ENCODE measurements at regions of chr7 and their contacts with region 1.

Region 1: GRCh38 chr7:26365077-26365900 is 73.6 kb downstream of the SNX10 start:
- DNase-seq: peak; percentile 88 to 94 (median 91)
- H3K4me3 ChIP-seq: no peak overlapping the region
- H3K27ac ChIP-seq: no peak overlapping the region
- H3K4me1 ChIP-seq: peaks cover 5 to 31% (median 24%) of the 10 kb centered on the region in 4 experiments
- H3K27me3 ChIP-seq: no peaks in the 10 kb centered on the region

Region 2: DNA sequence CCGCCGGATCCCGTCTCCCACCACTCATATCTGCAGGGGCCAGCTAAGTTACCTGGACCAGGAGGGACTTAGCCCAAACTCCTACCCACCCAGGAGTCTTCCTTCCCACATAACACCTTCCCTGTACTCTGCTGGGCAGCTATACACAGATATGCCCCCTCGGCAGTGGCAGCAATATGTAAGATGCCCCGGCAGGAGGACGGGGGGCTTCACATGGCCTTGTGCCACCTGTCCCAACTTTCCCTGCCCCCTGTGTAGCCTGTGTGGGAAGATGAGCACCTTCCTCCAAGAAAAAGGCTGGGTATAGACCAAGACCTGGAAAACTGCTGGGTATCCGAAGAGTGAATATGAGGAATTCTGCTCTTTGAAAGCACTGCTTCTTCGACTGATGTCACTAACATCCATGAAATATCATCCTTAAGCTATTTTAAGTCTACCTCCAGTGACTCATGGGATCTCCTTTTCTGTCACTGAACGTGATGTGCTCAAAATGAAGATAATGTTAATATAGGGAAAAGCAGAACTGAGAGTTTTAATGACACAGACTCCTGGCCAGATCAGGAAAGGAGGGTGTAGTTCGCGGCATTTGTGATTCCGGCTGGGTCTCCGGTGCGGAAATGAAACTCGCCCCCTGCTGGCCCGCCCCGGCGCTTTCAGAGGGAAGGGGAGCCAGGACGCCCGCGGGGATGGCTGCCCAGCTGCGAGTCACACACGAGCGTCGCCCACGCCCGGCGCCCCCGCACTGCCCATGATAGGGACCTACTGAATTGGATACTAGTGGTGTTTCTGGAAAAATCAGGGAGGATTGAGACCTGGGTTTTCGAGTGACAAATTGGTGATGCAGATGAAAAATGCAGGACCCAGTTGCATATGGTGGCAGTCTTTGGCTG is 470.1 kb before region 1 on chr7:
- CTCF ChIA-PET with region 1: interaction called, 112 read pairs
- POLR2A ChIA-PET with region 1: interaction called, 3 read pairs
- DNase-seq: peak; percentile 87 to 91 (median 89)
- H3K4me3 ChIP-seq: peak overlapping the region in 4 of 7 experiments; percentile 1 to 60 (median 36)
- H3K27ac ChIP-seq: no peak overlapping the region
- H3K4me1 ChIP-seq: peaks cover 8 to 41% (median 30%) of the 10 kb centered on the region in 4 experiments
- H3K27me3 ChIP-seq: peaks cover 0 to 36% (median 12%) of the 10 kb centered on the region in 5 experiments

Region 3: DNA sequence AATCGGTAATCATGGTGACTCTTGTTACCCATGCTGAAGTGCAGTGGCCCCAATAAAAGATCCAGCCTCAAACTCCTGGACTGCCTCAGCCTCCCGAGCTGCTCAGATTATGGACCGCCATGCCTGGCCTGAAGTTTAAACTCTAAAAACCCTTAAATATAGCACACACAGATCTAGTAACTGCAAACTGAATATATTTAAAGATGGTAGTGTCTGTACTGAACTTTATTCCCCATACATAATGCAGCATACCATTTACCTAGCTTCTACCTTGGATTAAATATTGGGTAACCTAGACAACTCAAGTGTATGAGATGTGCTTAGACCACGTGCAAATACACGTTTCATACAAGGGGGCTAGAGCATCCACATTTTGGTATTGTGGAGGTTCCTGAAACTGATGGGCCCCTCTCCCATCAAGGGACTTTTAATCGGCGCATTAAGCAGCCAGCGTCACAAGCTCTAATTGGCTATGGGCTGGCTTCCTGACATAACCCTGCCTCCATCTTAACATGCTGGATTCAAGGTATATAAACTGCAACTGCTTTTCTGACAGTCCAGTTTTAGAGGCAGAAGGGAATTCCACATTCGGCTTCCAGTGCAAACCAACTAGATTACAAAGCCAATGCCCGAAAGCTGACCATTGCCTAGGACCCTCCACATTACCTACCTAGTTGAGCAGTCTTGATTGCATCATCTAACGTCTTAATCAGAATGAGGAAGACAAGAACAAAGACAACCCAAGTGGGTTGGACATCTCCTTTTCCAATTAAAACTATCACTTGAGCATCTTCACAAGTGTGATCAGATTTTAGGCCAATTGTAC is 177.7 kb before region 1 on chr7:
- CTCF ChIA-PET with region 1: interaction called, 13 read pairs
- POLR2A ChIA-PET with region 1: no interaction called
- DNase-seq: peak in 2 of 3 donors; percentile 53 to 60
- H3K4me3 ChIP-seq: no peak overlapping the region
- H3K27ac ChIP-seq: peak overlapping the region in 1 of 2 experiments; percentile 14
- H3K4me1 ChIP-seq: peaks cover 2 to 8% (median 2%) of the 10 kb centered on the region in 4 experiments
- H3K27me3 ChIP-seq: no peaks in the 10 kb centered on the region

Region 4: DNA sequence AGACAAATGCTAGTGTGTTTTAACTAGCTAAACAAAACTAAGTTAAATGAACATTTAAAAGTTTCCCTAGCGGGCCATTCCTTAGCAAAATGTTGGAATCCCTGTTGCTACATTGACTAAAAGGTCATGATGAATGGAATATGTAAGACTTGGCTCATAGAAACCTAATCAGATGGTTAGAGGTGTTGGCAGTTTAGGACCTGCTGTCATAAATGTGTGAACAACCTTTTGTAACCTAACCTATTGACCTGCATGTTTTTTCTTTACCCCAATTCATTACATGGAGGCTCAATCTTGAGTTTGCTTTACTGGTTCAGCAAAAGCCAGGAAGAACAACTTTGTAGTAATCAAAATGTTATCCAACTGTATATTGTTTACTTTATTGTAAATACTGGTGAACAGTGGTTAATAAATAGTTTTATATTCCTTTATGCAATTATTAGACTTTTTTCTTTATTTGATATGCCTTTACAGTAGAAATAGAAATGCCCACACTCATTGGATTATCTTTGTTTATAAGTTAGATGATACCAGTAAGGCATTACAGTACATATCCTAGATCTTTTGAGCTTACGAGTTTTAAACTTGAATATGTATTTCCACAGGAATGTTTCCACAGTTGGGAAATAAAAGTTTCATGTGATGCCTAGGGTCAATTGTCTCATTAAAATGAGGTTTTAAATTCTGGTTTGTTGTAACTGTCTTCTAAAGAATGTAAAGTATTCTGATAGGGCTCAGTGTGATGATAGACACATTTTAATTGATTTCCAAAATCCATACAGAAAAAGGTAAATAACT is 152.2 kb before region 1 on chr7:
- CTCF ChIA-PET with region 1: no interaction called
- POLR2A ChIA-PET with region 1: no interaction called
- DNase-seq: no peak
- H3K4me3 ChIP-seq: no peak overlapping the region
- H3K27ac ChIP-seq: no peak overlapping the region
- H3K4me1 ChIP-seq: peaks cover 0 to 2% (median 0%) of the 10 kb centered on the region in 4 experiments
- H3K27me3 ChIP-seq: no peaks in the 10 kb centered on the region

Region 5: DNA sequence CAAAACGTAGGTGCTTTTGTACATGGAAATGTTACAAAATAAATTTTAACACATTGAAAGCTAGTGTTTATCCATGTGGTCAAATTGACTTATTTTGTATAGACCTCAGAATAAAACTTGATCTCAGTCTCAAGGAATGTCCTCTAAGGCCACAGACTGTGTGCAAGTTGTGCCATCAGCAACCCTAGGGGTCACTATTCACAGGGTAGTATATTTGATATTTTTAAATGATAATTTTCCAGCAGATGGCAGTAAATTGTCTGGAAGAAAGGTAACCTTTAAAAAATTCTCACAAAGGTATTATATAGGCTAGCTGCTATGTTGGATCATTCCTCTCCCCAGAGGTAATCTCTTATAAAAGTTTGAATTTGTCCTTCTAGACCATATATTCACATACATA is 86.5 kb before region 1 on chr7:
- CTCF ChIA-PET with region 1: interaction called, 57 read pairs
- POLR2A ChIA-PET with region 1: no interaction called
- DNase-seq: peak; percentile 60 to 66 (median 64)
- H3K4me3 ChIP-seq: peak overlapping the region in 3 of 7 experiments; percentile 11 to 70 (median 48)
- H3K27ac ChIP-seq: no peak overlapping the region
- H3K4me1 ChIP-seq: peaks cover 0 to 4% (median 2%) of the 10 kb centered on the region in 4 experiments
- H3K27me3 ChIP-seq: no peaks in the 10 kb centered on the region

Region 6: GRCh38 chr7:26376175-26376917 is 11.1 kb after region 1 on chr7:
- CTCF ChIA-PET with region 1: interaction called, 12 read pairs
- POLR2A ChIA-PET with region 1: no interaction called
- DNase-seq: peak; percentile 75 to 89 (median 87)
- H3K4me3 ChIP-seq: peak overlapping the region; percentile 83 to 90 (median 85)
- H3K27ac ChIP-seq: peak overlapping the region; percentile 77 to 87
- H3K4me1 ChIP-seq: peaks cover 20 to 55% (median 33%) of the 10 kb centered on the region in 4 experiments
- H3K27me3 ChIP-seq: no peaks in the 10 kb centered on the region

Region 7: GRCh38 chr7:26507108-26507987 is 142.1 kb after region 1 on chr7:
- CTCF ChIA-PET with region 1: no interaction called
- POLR2A ChIA-PET with region 1: no interaction called
- DNase-seq: no peak
- H3K4me3 ChIP-seq: no peak overlapping the region
- H3K27ac ChIP-seq: no peak overlapping the region
- H3K4me1 ChIP-seq: peaks cover 0 to 18% (median 6%) of the 10 kb centered on the region in 4 experiments
- H3K27me3 ChIP-seq: no peaks in the 10 kb centered on the region

Region 8: DNA sequence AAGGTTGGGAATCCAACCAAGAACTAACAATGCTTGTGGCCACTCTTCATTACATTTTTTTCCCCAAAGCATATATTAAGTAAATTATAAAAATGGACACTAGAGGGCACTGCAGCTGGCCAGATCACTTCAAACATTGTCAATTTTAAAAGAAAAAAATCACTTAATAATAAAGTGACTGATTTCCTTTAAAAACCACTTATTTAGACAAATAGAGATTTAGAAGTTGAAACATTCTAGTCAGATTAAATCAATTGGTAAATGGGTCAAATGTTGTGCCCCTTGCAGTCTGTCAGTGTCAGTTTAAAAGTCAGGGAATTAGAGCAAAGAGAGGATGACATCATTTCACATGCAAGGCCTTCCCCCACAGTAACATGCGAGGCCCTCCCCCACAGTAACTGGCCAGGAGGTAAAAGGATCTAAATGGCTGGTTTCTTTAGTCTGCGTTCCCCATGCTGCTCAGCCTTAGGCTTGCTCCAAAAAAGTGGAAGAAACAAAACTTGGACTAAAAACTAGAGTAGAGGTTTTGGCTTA is 321.2 kb after region 1 on chr7:
- CTCF ChIA-PET with region 1: interaction called, 19 read pairs
- POLR2A ChIA-PET with region 1: no interaction called
- DNase-seq: peak in 2 of 3 donors; percentile 69 to 79
- H3K4me3 ChIP-seq: no peak overlapping the region
- H3K27ac ChIP-seq: no peak overlapping the region
- H3K4me1 ChIP-seq: peaks cover 37 to 93% (median 60%) of the 10 kb centered on the region in 4 experiments
- H3K27me3 ChIP-seq: no peaks in the 10 kb centered on the region

Measured in common myeloid progenitor, CD34-positive (primary cell).